Cardiac septum (tissue), 1 donor: ENCODE measurements at regions of chr22 and their contacts with region 1.

Region 1: DNA sequence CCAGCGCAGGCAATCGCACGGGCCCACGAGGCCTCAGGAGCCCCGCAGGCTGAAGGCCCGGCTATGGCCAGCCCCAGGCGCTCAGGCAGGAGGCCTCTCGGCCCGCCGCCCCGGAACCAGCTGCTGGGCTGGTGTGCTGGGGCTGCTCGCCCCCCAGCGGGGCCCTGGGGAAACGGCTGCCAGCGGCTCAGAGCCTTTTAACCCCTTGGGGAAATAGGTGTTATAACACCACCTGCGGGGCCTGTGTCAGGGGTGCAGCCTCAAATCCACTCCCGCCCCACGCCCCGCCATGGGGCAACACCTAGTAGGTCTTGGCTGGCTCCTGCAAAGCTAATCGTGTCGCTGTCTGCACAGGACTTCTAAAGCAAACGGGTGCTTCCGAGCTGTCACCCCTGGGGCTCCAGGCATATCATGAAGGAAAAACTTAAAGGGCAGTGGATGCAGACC is 237.4 kb downstream of the TTC28 start:
- DNase-seq: peak; percentile 89

Region 2: DNA sequence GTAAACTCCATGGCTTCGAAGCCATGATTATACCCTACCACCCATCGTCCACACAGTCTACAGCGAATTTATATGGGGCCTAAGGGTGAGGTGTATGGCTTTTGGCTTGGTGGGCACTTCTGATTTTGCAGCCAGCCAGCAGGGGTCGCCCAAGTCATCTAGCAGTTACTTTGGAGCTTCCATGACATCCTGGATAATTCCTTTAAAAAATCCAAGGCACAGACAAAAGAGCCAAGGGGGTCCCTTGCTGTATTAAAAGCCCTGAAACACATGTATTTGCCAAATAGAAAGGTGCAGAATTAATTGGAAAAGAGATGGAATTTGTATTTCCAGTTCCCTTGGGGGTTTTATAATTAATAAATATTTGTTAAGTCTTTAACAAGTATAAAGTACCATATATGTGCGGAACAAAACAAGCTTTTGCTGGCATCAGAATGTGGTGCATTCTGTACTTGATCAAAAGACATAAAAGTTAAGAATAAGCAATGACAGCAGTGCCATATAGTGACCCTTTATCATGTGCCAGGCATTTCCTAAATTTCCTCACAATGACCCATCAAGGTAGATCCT is 390.4 kb before region 1 on chr22:
- intact Hi-C with region 1: loop called (anchors 2 kb)
- DNase-seq: no peak

Region 3: DNA sequence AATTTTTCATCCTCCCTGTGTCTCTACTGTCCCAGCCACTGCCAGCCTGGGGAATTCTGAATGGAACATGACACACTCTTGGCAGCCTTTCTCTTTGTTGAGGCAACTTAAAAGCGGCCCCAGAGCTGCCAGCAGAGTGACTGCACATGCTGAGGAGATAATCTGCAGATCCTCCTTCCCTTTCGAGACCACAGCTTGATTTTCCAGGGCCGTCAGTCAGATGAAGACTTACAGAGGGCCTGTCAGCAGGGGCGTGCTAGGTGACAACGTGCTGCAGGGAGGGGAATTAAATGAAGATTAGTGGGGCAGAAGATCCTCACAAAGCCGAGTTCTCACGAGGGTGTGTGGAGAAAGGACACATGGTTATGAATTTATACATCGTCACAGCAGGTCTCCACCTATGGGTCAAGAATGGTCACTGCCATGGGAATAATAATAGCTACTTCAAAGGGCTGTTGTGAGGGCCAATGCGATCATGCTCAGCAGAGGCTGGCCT is 329.7 kb before region 1 on chr22:
- intact Hi-C with region 1: loop called (anchors 2 kb)
- DNase-seq: peak; percentile 77